Posterior cingulate gyrus (tissue), 11 donors: ENCODE measurements at regions of chr2 and their contacts with region 1.

Region 1: GRCh38 chr2:144471305-144472045 is 48.4 kb downstream of the ZEB2 start:
- DNase-seq: no peak

Region 2: DNA sequence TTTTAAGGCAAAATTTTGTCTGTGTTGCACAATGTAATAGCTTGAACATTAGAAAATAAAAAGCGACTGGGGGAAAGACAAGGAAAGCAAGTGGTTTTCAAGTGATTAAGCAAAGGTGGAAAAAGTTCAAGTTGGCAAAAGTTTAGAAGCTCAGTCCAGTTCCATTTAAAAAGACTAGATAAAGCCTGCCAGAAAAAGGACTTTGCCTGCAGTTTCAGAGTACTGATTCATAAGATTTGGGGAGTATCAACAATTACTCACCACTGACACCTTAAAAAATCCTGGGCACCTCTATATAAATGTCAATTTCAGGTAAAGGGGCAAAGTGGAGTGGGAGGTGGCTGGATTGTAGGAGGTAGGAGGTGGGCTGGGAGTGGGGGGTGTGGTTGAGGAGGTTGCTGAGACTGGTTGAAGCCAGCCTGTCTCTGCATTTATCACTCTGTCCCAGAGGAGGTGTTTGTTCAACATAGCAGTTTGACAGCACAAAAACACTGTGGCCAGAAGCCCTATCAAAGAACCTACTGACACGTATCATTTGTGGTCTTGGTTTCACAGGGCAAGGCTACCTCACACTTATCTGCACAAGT is 33.9 kb after region 1 on chr2:
- intact Hi-C with region 1: loop called (anchors 5 kb)
- DNase-seq: no peak